B cell (primary cell): ENCODE measurements at regions of chr19 and their contacts with region 1.

Region 1: GRCh38 chr19:21020298-21021227 is at the start of gene ZNF430:
- DNase-seq: peak; percentile 96
- ATAC-seq: peak; percentile 98
- H3K4me3 ChIP-seq: peak within 1 kb of the TSS; percentile 77 to 98 (median 91)
- H3K4me3 Mint-ChIP-seq: peak within 1 kb of the TSS; percentile 99
- H3K27ac ChIP-seq: peak within 1 kb of the TSS; percentile 95 to 98
- H3K27ac Mint-ChIP-seq: peak within 1 kb of the TSS; percentile 99
- H3K4me1 ChIP-seq: peaks cover 19 to 23% of the 10 kb centered on the region in 2 donors
- H3K4me1 Mint-ChIP-seq: peaks cover 41% of the 10 kb centered on the region
- H3K27me3 ChIP-seq: no peaks in the 10 kb centered on the region
- H3K27me3 Mint-ChIP-seq: no peaks in the 10 kb centered on the region
- CTCF ChIP-seq: no peak
- total RNA-seq, gene ZNF430: 45.4 and 45.5 TPM in 2 replicates

Region 2: GRCh38 chr19:20661150-20661819 is 359.3 kb before region 1 on chr19 and contains the start of gene ZNF626:
- CTCF ChIA-PET with region 1: no interaction called
- POLR2A ChIA-PET with region 1: no interaction called
- intact Hi-C with region 1: loop called (anchors 1 kb)
- DNase-seq: peak; percentile 97
- ATAC-seq: peak; percentile 99
- H3K4me3 ChIP-seq: peak within 1 kb of the TSS; percentile 61 to 85 (median 77)
- H3K4me3 Mint-ChIP-seq: peak within 1 kb of the TSS; percentile 95
- H3K27ac ChIP-seq: peak within 1 kb of the TSS; percentile 85 to 91
- H3K27ac Mint-ChIP-seq: peak within 1 kb of the TSS; percentile 97
- H3K4me1 ChIP-seq: peaks cover 22 to 33% of the 10 kb centered on the region in 2 donors
- H3K4me1 Mint-ChIP-seq: peaks cover 41% of the 10 kb centered on the region
- H3K27me3 ChIP-seq: no peaks in the 10 kb centered on the region
- H3K27me3 Mint-ChIP-seq: no peaks in the 10 kb centered on the region
- CTCF ChIP-seq: no peak
- total RNA-seq, gene ZNF626: 15.2 and 17.6 TPM in 2 replicates

Region 3: GRCh38 chr19:20776083-20777076 is 244.2 kb before region 1 on chr19 and contains the start of gene ZNF66:
- CTCF ChIA-PET with region 1: no interaction called
- POLR2A ChIA-PET with region 1: no interaction called
- intact Hi-C with region 1: loop called (anchors 10 kb)
- DNase-seq: peak; percentile 95
- ATAC-seq: peak; percentile 98
- H3K4me3 ChIP-seq: peak within 1 kb of the TSS; percentile 74 to 91 (median 80)
- H3K4me3 Mint-ChIP-seq: peak within 1 kb of the TSS; percentile 97
- H3K27ac ChIP-seq: peak within 1 kb of the TSS; percentile 66 to 90
- H3K27ac Mint-ChIP-seq: peak within 1 kb of the TSS; percentile 91
- H3K4me1 ChIP-seq: peaks cover 0 to 5% of the 10 kb centered on the region in 2 donors
- H3K4me1 Mint-ChIP-seq: peaks cover 29% of the 10 kb centered on the region
- H3K27me3 ChIP-seq: no peaks in the 10 kb centered on the region
- H3K27me3 Mint-ChIP-seq: no peaks in the 10 kb centered on the region
- CTCF ChIP-seq: no peak
- total RNA-seq, gene ZNF66: 25.0 and 27.7 TPM in 2 replicates

Region 4: DNA sequence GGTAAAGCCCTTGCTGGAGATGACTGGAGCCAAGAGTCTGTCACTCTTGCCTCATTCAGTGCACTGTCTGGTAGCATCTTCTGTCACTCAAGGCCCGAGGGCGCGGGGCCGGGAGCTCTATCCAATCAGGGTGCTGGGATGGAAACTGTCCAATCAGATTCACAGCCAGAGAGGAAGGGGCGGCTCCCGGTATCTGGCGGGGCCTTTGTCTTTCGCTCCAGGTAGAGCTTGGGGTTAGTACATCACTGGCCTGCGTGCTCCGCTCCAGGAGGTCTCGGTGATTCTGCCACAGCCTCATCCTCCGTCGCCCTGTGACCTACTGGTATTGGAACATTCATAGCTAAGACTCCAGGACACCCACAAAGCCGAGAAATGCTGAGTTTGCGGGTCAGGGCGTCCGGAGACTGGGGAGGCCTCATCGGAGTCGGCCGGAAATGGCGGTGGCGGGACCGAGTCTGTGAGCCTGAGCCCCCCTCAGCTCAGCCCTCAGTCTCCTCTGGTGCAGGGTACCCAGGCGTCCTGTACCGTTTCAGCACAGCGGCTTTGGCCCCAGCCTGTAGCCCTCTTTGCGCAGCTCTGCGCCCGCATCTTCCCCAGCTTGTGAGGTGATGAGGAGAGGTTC is 20.7 kb before region 1 on chr19:
- CTCF ChIA-PET with region 1: interaction called, 4 read pairs
- POLR2A ChIA-PET with region 1: interaction called, 8 read pairs
- intact Hi-C with region 1: loop called (anchors 1 kb)
- DNase-seq: peak; percentile 93
- ATAC-seq: peak; percentile 100
- H3K4me3 ChIP-seq: peak overlapping the region; percentile 34 to 84 (median 60)
- H3K4me3 Mint-ChIP-seq: peak overlapping the region; percentile 87
- H3K27ac ChIP-seq: no peak overlapping the region
- H3K27ac Mint-ChIP-seq: peak overlapping the region; percentile 61
- H3K4me1 ChIP-seq: peaks cover 0 to 5% of the 10 kb centered on the region in 2 donors
- H3K4me1 Mint-ChIP-seq: peaks cover 6% of the 10 kb centered on the region
- H3K27me3 ChIP-seq: no peaks in the 10 kb centered on the region
- H3K27me3 Mint-ChIP-seq: no peaks in the 10 kb centered on the region
- CTCF ChIP-seq: no peak

Region 5: GRCh38 chr19:21047716-21048115 is 27.2 kb after region 1 on chr19:
- CTCF ChIA-PET with region 1: no interaction called
- POLR2A ChIA-PET with region 1: no interaction called
- intact Hi-C with region 1: no loop called
- DNase-seq: peak; percentile 12
- ATAC-seq: no peak
- H3K4me3 ChIP-seq: no peak overlapping the region
- H3K4me3 Mint-ChIP-seq: no peak overlapping the region
- H3K27ac ChIP-seq: peak overlapping the region in 1 of 2 donors; percentile 34
- H3K27ac Mint-ChIP-seq: no peak overlapping the region
- H3K4me1 ChIP-seq: no peaks in the 10 kb centered on the region
- H3K4me1 Mint-ChIP-seq: peaks cover 14% of the 10 kb centered on the region
- H3K27me3 ChIP-seq: no peaks in the 10 kb centered on the region
- H3K27me3 Mint-ChIP-seq: no peaks in the 10 kb centered on the region
- CTCF ChIP-seq: no peak

Region 6: GRCh38 chr19:21082011-21082975 is 61.7 kb after region 1 on chr19 and contains the start of gene ZNF714:
- CTCF ChIA-PET with region 1: no interaction called
- POLR2A ChIA-PET with region 1: no interaction called
- intact Hi-C with region 1: loop called (anchors 2 kb)
- DNase-seq: peak; percentile 84
- ATAC-seq: peak; percentile 100
- H3K4me3 ChIP-seq: peak within 1 kb of the TSS in 4 of 5 experiments; percentile 87 to 96 (median 90)
- H3K4me3 Mint-ChIP-seq: peak within 1 kb of the TSS; percentile 99
- H3K27ac ChIP-seq: peak within 1 kb of the TSS; percentile 52 to 57
- H3K27ac Mint-ChIP-seq: peak within 1 kb of the TSS; percentile 94
- H3K4me1 ChIP-seq: peaks cover 0 to 3% of the 10 kb centered on the region in 2 donors
- H3K4me1 Mint-ChIP-seq: peaks cover 14% of the 10 kb centered on the region
- H3K27me3 ChIP-seq: no peaks in the 10 kb centered on the region
- H3K27me3 Mint-ChIP-seq: no peaks in the 10 kb centered on the region
- CTCF ChIP-seq: no peak
- total RNA-seq, gene ZNF714: 10.7 and 11.9 TPM in 2 replicates

Region 7: DNA sequence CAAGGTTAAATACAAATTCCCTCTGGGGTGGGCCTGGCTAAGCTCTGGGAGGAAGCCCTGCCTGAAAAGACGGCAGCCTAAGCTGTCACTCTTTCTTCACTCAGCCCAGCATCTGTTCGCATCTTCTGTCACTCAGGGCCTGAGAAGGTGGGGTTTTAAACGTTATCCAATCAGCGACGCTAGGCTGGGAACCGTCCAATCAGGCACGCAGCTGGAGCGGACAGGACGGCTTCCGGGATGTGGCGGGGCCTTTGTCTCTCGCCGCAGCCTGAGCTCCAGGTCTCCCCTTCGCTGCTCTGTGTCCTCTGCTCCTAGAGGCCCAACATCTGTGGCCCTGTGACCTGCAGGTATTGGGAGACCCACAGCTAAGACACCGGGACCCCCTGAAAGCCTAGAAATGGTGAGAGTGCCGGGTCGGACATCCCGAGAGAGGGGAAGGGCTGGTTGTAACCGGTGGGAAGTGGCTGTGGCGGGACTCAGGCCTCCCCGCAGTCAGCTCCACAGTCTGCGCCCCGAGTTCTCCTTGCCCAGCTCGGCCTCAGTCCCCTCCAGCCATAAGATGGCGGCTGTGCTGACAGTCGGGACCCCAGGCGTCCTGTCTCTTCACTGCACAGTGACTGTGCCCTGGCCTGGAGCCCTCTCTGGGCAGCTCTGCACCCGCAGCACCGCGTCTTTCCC is 121.4 kb after region 1 on chr19 and contains the start of gene ZNF431:
- CTCF ChIA-PET with region 1: interaction called, 3 read pairs
- POLR2A ChIA-PET with region 1: interaction called, 5 read pairs
- intact Hi-C with region 1: loop called (anchors 2 kb)
- DNase-seq: peak; percentile 92
- ATAC-seq: peak; percentile 99
- H3K4me3 ChIP-seq: peak within 1 kb of the TSS; percentile 38 to 90 (median 78)
- H3K4me3 Mint-ChIP-seq: peak within 1 kb of the TSS; percentile 98
- H3K27ac ChIP-seq: peak within 1 kb of the TSS; percentile 80
- H3K27ac Mint-ChIP-seq: peak within 1 kb of the TSS; percentile 95
- H3K4me1 ChIP-seq: peaks cover 6 to 10% of the 10 kb centered on the region in 2 donors
- H3K4me1 Mint-ChIP-seq: peaks cover 27% of the 10 kb centered on the region
- H3K27me3 ChIP-seq: no peaks in the 10 kb centered on the region
- H3K27me3 Mint-ChIP-seq: no peaks in the 10 kb centered on the region
- CTCF ChIP-seq: no peak
- total RNA-seq, gene ZNF431: 40.7 and 50.0 TPM in 2 replicates

Region 8: GRCh38 chr19:21835810-21836444 is 815.4 kb after region 1 on chr19 and contains the start of gene ZNF43:
- CTCF ChIA-PET with region 1: no interaction called
- POLR2A ChIA-PET with region 1: no interaction called
- intact Hi-C with region 1: loop called (anchors 2 kb)
- DNase-seq: peak; percentile 92
- ATAC-seq: peak; percentile 98
- H3K4me3 ChIP-seq: peak within 1 kb of the TSS; percentile 61 to 96 (median 74)
- H3K4me3 Mint-ChIP-seq: peak within 1 kb of the TSS; percentile 99
- H3K27ac ChIP-seq: peak within 1 kb of the TSS; percentile 81 to 93
- H3K27ac Mint-ChIP-seq: peak within 1 kb of the TSS; percentile 99
- H3K4me1 ChIP-seq: peaks cover 4 to 17% of the 10 kb centered on the region in 2 donors
- H3K4me1 Mint-ChIP-seq: peaks cover 30% of the 10 kb centered on the region
- H3K27me3 ChIP-seq: no peaks in the 10 kb centered on the region
- H3K27me3 Mint-ChIP-seq: no peaks in the 10 kb centered on the region
- CTCF ChIP-seq: no peak
- total RNA-seq, gene ZNF43: 59.8 and 69.9 TPM in 2 replicates